B cell (primary cell): ENCODE measurements at regions of chr1 and their contacts with region 1.

Region 1: DNA sequence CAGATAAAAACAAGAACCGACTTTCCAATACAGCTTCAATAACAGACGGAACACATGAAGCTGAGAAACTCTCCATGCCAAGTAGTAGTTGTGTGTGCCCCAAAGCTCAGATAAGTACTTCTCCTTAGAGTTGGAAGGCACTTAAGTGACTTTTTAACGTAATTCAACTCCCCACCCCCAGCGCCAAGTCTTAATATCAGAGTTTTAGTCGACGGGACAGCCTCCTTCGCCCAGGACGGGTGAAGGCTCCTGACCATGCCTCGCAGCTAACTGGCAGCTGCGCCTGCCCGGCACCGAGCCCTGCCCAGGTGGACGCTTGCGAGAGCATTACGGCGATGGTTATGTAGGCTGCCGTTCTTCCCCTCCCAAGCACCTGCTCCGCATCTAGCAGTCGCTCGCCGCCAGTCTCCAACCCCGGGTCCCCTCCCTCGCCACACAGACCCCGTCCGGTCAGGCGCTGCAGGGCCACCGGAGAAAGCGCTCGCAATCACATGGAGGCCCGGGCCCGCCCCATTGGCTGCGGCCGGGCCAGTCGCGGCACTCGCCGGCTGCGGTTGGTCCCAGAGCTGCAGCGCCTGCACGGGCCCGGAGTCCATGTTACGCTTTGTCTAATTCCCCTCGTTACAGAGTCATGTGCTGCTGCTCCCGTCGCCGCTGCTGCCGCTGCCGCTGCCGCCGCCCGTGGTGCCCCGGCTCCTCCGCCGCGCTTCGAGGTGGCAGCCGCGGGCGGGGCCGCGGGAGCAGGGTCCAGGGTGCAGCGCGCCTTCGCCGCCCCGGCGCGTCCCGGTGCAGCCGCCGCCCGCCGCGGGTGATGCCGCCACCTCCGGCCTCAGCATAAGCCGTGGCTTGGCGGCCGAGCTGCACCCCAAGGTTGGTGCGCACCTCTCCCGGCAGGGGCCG is at the start of gene LRRC8D:
- DNase-seq: peak; percentile 85
- ATAC-seq: peak; percentile 66
- H3K4me3 ChIP-seq: peak within 1 kb of the TSS; percentile 65 to 87 (median 76)
- H3K4me3 Mint-ChIP-seq: peak within 1 kb of the TSS; percentile 90
- H3K27ac ChIP-seq: peak within 1 kb of the TSS; percentile 68 to 73
- H3K27ac Mint-ChIP-seq: peak within 1 kb of the TSS; percentile 92
- H3K4me1 ChIP-seq: peaks cover 25 to 30% of the 10 kb centered on the region in 2 donors
- H3K4me1 Mint-ChIP-seq: peaks cover 46% of the 10 kb centered on the region
- H3K27me3 ChIP-seq: no peaks in the 10 kb centered on the region
- H3K27me3 Mint-ChIP-seq: no peaks in the 10 kb centered on the region
- CTCF ChIP-seq: no peak
- total RNA-seq, gene LRRC8D: 46.8 and 47.0 TPM in 2 replicates

Region 2: GRCh38 chr1:89804642-89805237 is 15.9 kb before region 1 on chr1:
- CTCF ChIA-PET with region 1: interaction called, 5 read pairs
- POLR2A ChIA-PET with region 1: interaction called, 3 read pairs
- intact Hi-C with region 1: loop called (anchors 1 kb)
- DNase-seq: peak; percentile 87
- ATAC-seq: peak; percentile 93
- H3K4me3 ChIP-seq: no peak overlapping the region
- H3K4me3 Mint-ChIP-seq: no peak overlapping the region
- H3K27ac ChIP-seq: no peak overlapping the region
- H3K27ac Mint-ChIP-seq: no peak overlapping the region
- H3K4me1 ChIP-seq: peaks cover 0 to 3% of the 10 kb centered on the region in 2 donors
- H3K4me1 Mint-ChIP-seq: no peaks in the 10 kb centered on the region
- H3K27me3 ChIP-seq: peaks cover 0 to 3% (median 0%) of the 10 kb centered on the region in 4 experiments
- H3K27me3 Mint-ChIP-seq: no peaks in the 10 kb centered on the region
- CTCF ChIP-seq: peak; percentile 90

Region 3: DNA sequence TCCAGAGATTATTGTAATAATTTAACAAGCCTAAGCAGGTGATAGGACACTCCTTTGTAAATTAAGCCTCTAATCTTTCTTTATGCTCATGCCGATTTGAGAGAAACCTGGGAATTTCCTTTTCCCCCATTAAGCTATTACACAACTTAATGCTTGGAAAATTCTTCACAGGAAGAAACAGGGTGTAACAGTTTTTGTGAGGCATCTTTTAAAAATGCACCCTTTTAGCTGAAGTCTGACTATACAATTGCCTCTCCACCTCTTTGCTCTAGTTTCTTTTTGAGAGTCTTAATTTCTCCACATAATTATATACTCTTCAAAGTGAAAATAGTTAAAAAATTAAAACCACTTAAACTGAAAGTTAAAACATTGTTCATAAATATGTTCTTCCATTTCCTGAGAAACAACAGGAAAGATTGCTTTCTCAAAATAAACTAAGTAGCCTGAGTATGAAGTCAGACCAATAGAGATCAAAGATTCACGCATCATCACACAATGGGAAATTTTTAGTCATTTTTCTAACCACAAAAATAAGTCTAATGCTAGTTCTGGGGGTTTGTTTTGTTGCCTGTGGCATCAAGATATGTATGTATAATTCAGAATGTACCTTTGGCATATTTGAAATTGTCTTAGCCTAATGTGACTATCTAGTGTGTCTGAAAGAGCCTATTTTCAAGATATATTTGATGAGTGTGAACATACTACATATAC is 34.9 kb after region 1 on chr1:
- CTCF ChIA-PET with region 1: no interaction called
- POLR2A ChIA-PET with region 1: interaction called, 3 read pairs
- intact Hi-C with region 1: loop called (anchors 5 kb)
- DNase-seq: peak; percentile 38
- ATAC-seq: peak; percentile 71
- H3K4me3 ChIP-seq: peak overlapping the region in 2 of 5 experiments; percentile 13 to 35
- H3K4me3 Mint-ChIP-seq: no peak overlapping the region
- H3K27ac ChIP-seq: peak overlapping the region in 1 of 2 donors; percentile 58
- H3K27ac Mint-ChIP-seq: peak overlapping the region; percentile 77
- H3K4me1 ChIP-seq: peaks cover 20 to 32% of the 10 kb centered on the region in 2 donors
- H3K4me1 Mint-ChIP-seq: peaks cover 9% of the 10 kb centered on the region
- H3K27me3 ChIP-seq: no peaks in the 10 kb centered on the region
- H3K27me3 Mint-ChIP-seq: no peaks in the 10 kb centered on the region
- CTCF ChIP-seq: no peak

Region 4: GRCh38 chr1:89994805-89995597 is 174.3 kb after region 1 on chr1 and contains the start of gene ZNF326:
- CTCF ChIA-PET with region 1: interaction called, 6 read pairs
- POLR2A ChIA-PET with region 1: interaction called, 3 read pairs
- intact Hi-C with region 1: loop called (anchors 1 kb)
- DNase-seq: peak; percentile 94
- ATAC-seq: peak; percentile 97
- H3K4me3 ChIP-seq: peak within 1 kb of the TSS; percentile 72 to 95 (median 80)
- H3K4me3 Mint-ChIP-seq: peak within 1 kb of the TSS; percentile 99
- H3K27ac ChIP-seq: peak within 1 kb of the TSS; percentile 85 to 87
- H3K27ac Mint-ChIP-seq: peak within 1 kb of the TSS; percentile 96
- H3K4me1 ChIP-seq: peaks cover 8 to 12% of the 10 kb centered on the region in 2 donors
- H3K4me1 Mint-ChIP-seq: peaks cover 32% of the 10 kb centered on the region
- H3K27me3 ChIP-seq: no peaks in the 10 kb centered on the region
- H3K27me3 Mint-ChIP-seq: no peaks in the 10 kb centered on the region
- CTCF ChIP-seq: no peak
- total RNA-seq, gene ZNF326: 32.0 and 34.1 TPM in 2 replicates